G401 (cell line): ENCODE measurements at regions of chr1 and their contacts with region 1.

Region 1: GRCh38 chr1:181166377-181167196 is 78.1 kb downstream of the IER5 start:
- DNase-seq: peak; percentile 90

Region 2: GRCh38 chr1:180881806-180882509 is 284.6 kb before region 1 on chr1:
- in situ Hi-C with region 1: loop called (anchors 10 kb)
- DNase-seq: peak; percentile 85

Region 3: DNA sequence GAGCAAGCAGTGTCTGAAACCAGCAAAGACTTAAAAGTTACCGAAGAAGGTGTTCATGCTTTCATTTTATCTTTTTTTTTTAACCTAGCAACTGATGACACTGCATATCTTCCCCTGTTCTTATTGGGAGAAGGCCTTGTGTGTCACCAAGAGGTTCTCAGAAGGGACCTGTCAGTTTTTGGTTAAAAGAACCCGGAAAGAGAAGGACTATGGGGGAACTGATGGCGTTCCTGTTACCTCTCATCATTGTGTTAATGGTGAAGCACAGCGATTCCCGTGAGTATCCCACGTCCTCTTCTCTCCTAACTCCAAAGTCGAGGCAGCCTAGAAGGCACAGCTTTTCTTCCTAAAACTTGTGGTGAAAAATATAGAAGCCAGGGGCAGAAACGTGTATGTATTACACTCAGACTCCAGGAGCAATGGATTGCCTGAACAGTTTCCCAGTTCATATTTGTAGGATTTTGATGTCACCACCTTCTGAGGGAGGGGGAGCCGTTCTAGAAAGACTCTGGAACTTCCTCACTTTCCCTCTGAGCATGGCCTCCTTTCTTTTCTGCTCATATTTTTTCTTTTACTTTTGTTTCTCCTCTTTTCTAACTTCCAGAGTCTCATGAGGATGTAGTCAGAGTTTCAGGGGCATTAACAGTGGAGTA is 132.7 kb before region 1 on chr1 and contains the start of gene MR1:
- in situ Hi-C with region 1: loop called (anchors 10 kb)
- DNase-seq: peak; percentile 89
- total RNA-seq, gene MR1: 8.3 and 10.6 TPM in 2 replicates

Region 4: DNA sequence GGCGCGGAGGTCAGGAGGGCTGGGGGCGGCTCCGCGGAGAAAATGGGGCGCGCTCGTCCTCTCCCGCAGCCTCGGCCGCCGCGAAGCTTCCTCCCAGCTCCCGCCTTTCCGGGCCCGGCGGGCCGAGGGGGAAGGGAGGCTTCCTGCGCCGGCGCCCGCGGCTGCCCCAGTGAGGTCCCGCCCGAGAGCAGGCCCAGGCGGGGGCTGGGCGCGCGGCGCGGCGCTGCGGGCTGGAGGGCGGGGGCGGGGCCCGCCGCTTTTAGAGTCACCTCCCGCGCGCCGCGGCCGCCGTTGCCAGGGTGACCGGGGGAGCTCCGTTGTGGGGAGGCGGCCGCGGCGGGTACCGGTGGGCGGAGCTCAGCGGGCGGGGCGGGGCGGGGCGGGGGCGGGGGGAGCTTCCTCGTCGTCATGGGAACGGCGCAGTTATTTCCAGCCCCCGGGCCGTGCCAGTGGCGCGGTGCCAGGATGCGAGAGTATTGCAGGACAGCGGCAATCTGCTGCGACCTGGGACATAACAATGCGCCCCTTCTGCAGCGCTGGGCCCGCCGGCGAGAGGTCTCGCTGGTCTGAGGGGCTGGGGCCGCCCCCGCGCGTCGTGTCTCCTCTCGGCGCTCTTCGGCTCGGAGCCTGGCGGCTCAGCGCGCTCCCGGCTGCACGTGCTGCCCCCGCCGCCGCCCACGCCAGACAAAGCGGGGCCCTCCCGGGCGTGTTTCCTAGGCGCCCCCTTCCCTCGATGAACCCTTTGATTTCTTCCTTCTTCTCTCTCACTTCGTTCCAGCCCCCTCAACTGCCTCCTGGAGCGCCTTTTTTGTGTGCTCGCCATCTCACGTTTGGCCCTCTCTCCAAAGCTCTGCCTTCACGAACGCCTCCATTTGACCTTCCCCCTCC is 61.2 kb before region 1 on chr1:
- in situ Hi-C with region 1: no loop called
- DNase-seq: peak; percentile 93

Region 5: GRCh38 chr1:181219938-181220337 is 53.4 kb after region 1 on chr1:
- in situ Hi-C with region 1: no loop called
- DNase-seq: no peak